Caco-2 (cell line): ENCODE measurements at regions of chr21 and their contacts with region 1.

Region 1: GRCh38 chr21:26280775-26281174 is 110.2 kb upstream of the APP start:
- DNase-seq: no peak
- H3K4me3 ChIP-seq: no peak overlapping the region
- H3K4me3 Mint-ChIP-seq: no peak overlapping the region
- H3K27ac Mint-ChIP-seq: no peak overlapping the region
- H3K4me1 ChIP-seq: no peaks in the 10 kb centered on the region
- H3K4me1 Mint-ChIP-seq: no peaks in the 10 kb centered on the region
- H3K27me3 ChIP-seq: no peaks in the 10 kb centered on the region
- H3K27me3 Mint-ChIP-seq: peaks cover 4% of the 10 kb centered on the region
- CTCF ChIP-seq: no peak

Region 2: DNA sequence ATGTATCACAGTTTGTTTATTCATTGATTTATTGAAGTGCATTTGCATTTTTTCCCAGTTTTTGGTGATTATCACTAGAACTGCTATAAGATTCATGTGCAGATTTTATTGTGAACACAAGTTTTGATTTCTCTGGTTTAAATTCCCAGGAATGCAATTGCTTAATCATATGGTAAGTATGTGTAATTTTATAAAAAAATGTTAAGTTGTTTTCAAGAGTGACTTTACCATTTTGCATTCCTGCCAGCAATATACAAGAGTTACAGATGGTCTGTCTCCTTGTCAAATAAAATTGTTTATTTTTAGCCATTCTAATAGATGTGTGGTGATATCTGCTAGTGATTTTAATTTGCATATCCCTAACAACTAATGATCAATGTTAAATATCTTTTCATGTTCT is 17.1 kb after region 1 on chr21:
- CTCF ChIA-PET with region 1: no interaction called
- POLR2A ChIA-PET with region 1: no interaction called
- intact Hi-C with region 1: loop called (anchors 1 kb)
- DNase-seq: no peak
- H3K4me3 ChIP-seq: no peak overlapping the region
- H3K4me3 Mint-ChIP-seq: no peak overlapping the region
- H3K27ac Mint-ChIP-seq: no peak overlapping the region
- H3K4me1 ChIP-seq: no peaks in the 10 kb centered on the region
- H3K4me1 Mint-ChIP-seq: no peaks in the 10 kb centered on the region
- H3K27me3 ChIP-seq: no peaks in the 10 kb centered on the region
- H3K27me3 Mint-ChIP-seq: no peaks in the 10 kb centered on the region
- CTCF ChIP-seq: no peak